GM10248 (cell line): ENCODE measurements at regions of chr12 and their contacts with region 1.

Region 1: DNA sequence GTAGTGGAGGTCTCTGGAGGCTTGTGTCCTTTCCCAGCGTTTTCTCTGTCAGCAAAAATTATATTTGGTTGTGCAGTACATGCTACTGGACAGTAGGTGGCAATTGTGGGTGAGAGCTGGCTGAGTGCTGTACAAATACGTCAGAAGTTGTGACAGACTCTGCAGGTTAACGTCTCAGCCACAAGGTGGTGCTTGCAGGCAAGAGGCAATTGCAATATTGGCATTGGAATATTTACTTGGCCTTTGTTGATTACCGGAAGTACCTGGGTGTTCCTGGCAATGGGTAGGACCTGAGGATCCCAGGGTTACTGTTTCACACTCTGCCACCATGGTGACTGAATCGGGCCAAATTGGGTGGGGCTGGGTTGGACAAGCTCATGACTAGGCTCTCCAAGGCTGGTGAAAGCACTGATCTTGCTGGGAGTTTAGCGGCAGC is 333.9 kb upstream of the LMO3 start:
- DNase-seq: peak; percentile 46
- CTCF ChIP-seq: peak; percentile 60

Region 2: GRCh38 chr12:16913832-16914490 is 25.9 kb before region 1 on chr12:
- CTCF ChIA-PET with region 1: no interaction called
- POLR2A ChIA-PET with region 1: no interaction called
- DNase-seq: no peak
- CTCF ChIP-seq: no peak

Region 3: DNA sequence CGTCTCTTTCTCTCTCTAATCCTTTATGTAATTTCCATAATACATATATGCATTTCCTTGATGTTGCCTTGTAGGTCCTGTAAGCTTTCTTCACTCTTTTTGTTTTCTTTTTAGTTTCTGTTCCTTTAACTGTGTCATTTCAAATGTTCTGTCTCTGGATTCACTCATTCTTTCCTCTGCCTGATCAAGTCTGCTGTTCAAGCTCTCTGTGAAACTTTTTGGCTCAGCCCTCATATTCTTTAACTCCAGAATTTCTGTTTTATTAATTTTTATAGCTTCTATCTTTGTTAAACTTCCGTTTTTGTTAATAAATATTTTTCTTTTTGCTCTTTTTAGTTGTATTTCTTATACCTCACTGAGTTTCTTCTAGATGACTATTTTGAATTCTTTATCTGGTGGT is 12.6 kb before region 1 on chr12:
- CTCF ChIA-PET with region 1: interaction called, 29 read pairs
- POLR2A ChIA-PET with region 1: no interaction called
- DNase-seq: no peak
- CTCF ChIP-seq: no peak

Region 4: GRCh38 chr12:17992002-17992656 is 1052.2 kb after region 1 on chr12:
- CTCF ChIA-PET with region 1: interaction called, 25 read pairs
- POLR2A ChIA-PET with region 1: no interaction called
- DNase-seq: peak; percentile 21
- CTCF ChIP-seq: peak; percentile 71